Activated CD4-positive, alpha-beta T cell treated with anti-CD3 and anti-CD28 coated beads for 36 hours (primary cell): ENCODE measurements at regions of chr19 and their contacts with region 1.

Region 1: GRCh38 chr19:52527134-52527955 is at the start of gene ZNF808:
- DNase-seq: peak; percentile 99
- ATAC-seq: peak; percentile 92
- H3K4me3 Mint-ChIP-seq: peak within 1 kb of the TSS; percentile 91
- H3K27ac Mint-ChIP-seq: peak within 1 kb of the TSS; percentile 94
- H3K4me1 Mint-ChIP-seq: peaks cover 23% of the 10 kb centered on the region
- H3K27me3 Mint-ChIP-seq: no peaks in the 10 kb centered on the region
- total RNA-seq, gene ZNF808: 25.7 to 29.9 TPM

Region 2: DNA sequence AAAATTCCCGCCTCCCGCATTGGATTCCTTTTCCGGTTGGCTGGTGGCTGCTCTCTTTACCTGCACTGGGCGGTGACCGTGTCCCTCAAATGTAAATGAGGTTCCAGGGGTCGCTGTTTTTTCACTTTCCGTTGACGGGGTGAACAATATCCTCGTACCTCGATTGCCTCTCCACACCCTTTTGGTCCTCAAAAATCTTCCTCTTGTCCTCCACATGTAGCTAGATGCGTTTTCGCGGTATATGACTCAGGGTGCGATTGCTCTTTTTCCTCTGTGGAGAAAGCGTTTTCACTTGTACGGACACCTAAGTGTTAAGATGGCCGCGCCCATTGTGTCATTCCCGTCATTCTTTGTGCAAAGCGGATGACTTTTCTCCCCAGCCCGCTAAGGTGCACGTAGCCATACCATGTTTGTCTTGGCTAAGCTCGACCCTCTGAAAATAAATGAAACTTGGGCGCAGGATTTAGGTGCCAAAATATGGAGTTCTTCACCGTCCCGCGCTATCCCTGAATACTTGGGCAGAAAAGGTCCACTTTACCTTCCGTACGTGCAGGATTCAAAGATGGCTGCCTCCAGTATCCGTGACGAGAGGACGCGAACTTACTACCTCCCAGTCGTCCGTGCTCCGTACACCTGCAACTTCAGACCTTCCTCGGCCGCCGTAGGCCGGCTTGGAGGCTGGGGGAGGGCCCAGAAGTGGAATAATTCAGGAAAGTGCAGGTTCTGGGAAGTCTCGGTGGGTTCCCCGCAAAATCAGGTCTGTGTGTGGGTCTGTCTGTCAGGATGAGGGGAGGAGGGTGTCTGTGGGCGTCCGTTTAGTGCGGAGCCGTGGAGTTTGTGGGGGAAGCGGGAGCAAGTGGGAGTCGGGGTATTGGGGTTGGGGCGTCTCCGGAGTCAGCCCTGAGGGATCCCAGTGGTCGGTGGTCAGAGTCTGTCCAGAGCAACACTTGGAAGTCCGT is 600.3 kb before region 1 on chr19 and contains the start of gene ZNF613:
- CTCF ChIA-PET with region 1: no interaction called
- POLR2A ChIA-PET with region 1: no interaction called
- intact Hi-C with region 1: loop called in 1 of 2 experiments (anchors 2 kb)
- DNase-seq: peak; percentile 91
- ATAC-seq: peak; percentile 95
- H3K4me3 Mint-ChIP-seq: peak within 1 kb of the TSS; percentile 95
- H3K27ac Mint-ChIP-seq: peak within 1 kb of the TSS; percentile 97
- H3K4me1 Mint-ChIP-seq: peaks cover 20% of the 10 kb centered on the region
- H3K27me3 Mint-ChIP-seq: no peaks in the 10 kb centered on the region
- total RNA-seq, gene ZNF613: 4.2 to 6.3 TPM

Region 3: GRCh38 chr19:52171321-52172169 is 355.8 kb before region 1 on chr19 and contains the start of gene ZNF836:
- CTCF ChIA-PET with region 1: no interaction called
- POLR2A ChIA-PET with region 1: no interaction called
- intact Hi-C with region 1: loop called in 1 of 2 experiments (anchors 1 kb)
- DNase-seq: peak; percentile 96
- ATAC-seq: peak; percentile 96
- H3K4me3 Mint-ChIP-seq: peak within 1 kb of the TSS; percentile 87
- H3K27ac Mint-ChIP-seq: peak within 1 kb of the TSS; percentile 93
- H3K4me1 Mint-ChIP-seq: peaks cover 17% of the 10 kb centered on the region
- H3K27me3 Mint-ChIP-seq: no peaks in the 10 kb centered on the region
- total RNA-seq, gene ZNF836: 10.1 to 11.5 TPM

Region 4: GRCh38 chr19:52336117-52336790 is 191.1 kb before region 1 on chr19 and contains the start of gene ZNF610:
- CTCF ChIA-PET with region 1: no interaction called
- POLR2A ChIA-PET with region 1: no interaction called
- intact Hi-C with region 1: loop called in 1 of 2 experiments (anchors 1 kb)
- DNase-seq: peak; percentile 96
- ATAC-seq: peak; percentile 97
- H3K4me3 Mint-ChIP-seq: peak within 1 kb of the TSS; percentile 97
- H3K27ac Mint-ChIP-seq: peak within 1 kb of the TSS; percentile 96
- H3K4me1 Mint-ChIP-seq: peaks cover 10% of the 10 kb centered on the region
- H3K27me3 Mint-ChIP-seq: no peaks in the 10 kb centered on the region
- total RNA-seq, gene ZNF610: 2.3 to 3.3 TPM

Region 5: DNA sequence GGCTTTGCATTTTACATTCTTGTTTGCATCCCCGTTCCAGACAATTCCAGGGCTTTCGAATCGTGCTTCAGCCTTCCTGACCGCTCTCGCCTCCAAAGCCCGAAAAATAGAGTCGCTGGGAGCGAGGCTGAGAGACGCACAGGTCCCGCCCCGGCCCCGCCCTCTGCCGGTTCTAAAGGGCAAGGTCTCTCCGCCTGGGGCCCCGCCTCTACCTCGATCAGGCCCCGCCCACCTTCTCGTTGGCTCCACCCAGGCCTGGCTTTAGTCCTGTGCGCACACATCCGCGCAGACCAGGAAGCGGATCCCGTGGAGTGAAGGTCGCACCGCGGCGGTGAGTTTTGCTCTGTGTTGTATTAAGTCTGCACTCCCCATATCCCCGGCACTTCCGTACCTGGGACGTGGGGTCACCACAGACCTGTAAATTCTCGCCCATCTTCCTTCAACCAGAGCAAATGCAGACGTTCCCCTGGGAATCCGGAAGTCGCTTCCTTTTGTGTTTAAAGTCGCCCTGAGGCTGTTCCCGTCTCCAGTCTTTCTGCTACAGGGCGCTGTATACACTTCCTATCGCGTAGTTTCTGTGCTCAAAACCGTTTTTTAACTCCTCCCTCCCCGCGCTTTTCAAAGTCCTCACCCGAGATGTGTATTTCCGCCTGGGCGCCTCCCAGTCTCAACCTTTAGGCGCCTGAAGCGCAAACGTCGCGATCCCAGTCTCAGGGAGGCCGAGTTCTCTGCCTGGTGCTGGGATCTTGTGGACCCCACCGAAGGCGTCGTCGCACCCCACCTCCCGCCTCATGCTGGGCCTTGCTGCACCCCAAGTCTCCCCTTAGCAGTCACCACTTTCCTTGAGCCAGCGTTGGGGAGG is 42.9 kb after region 1 on chr19 and contains the start of gene ZNF701:
- CTCF ChIA-PET with region 1: no interaction called
- POLR2A ChIA-PET with region 1: no interaction called
- intact Hi-C with region 1: loop called in 1 of 2 experiments (anchors 1 kb)
- DNase-seq: peak; percentile 98
- ATAC-seq: peak; percentile 99
- H3K4me3 Mint-ChIP-seq: peak within 1 kb of the TSS; percentile 88
- H3K27ac Mint-ChIP-seq: peak within 1 kb of the TSS; percentile 96
- H3K4me1 Mint-ChIP-seq: peaks cover 27% of the 10 kb centered on the region
- H3K27me3 Mint-ChIP-seq: no peaks in the 10 kb centered on the region
- total RNA-seq, gene ZNF701: 19.0 to 21.5 TPM

Region 6: GRCh38 chr19:52690369-52691214 is 163.2 kb after region 1 on chr19:
- CTCF ChIA-PET with region 1: interaction called, 3 read pairs
- POLR2A ChIA-PET with region 1: no interaction called
- intact Hi-C with region 1: loop called in 1 of 2 experiments (anchors 2 kb)
- DNase-seq: peak; percentile 96
- ATAC-seq: peak; percentile 95
- H3K4me3 Mint-ChIP-seq: peak overlapping the region; percentile 90
- H3K27ac Mint-ChIP-seq: peak overlapping the region; percentile 96
- H3K4me1 Mint-ChIP-seq: peaks cover 27% of the 10 kb centered on the region
- H3K27me3 Mint-ChIP-seq: no peaks in the 10 kb centered on the region

Region 7: GRCh38 chr19:53333463-53334449 is 806.4 kb after region 1 on chr19 and contains the start of gene ZNF845:
- CTCF ChIA-PET with region 1: no interaction called
- POLR2A ChIA-PET with region 1: interaction called, 4 read pairs
- intact Hi-C with region 1: loop called in 1 of 2 experiments (anchors 1 kb)
- DNase-seq: peak; percentile 97
- ATAC-seq: peak; percentile 99
- H3K4me3 Mint-ChIP-seq: peak within 1 kb of the TSS; percentile 88
- H3K27ac Mint-ChIP-seq: peak within 1 kb of the TSS; percentile 92
- H3K4me1 Mint-ChIP-seq: peaks cover 10% of the 10 kb centered on the region
- H3K27me3 Mint-ChIP-seq: peaks cover 5% of the 10 kb centered on the region
- total RNA-seq, gene ZNF845: 5.9 to 6.3 TPM

Region 8: GRCh38 chr19:53455828-53456227 is 928.5 kb after region 1 on chr19:
- CTCF ChIA-PET with region 1: no interaction called
- POLR2A ChIA-PET with region 1: no interaction called
- intact Hi-C with region 1: no loop called
- DNase-seq: no peak
- ATAC-seq: no peak
- H3K4me3 Mint-ChIP-seq: no peak overlapping the region
- H3K27ac Mint-ChIP-seq: no peak overlapping the region
- H3K4me1 Mint-ChIP-seq: no peaks in the 10 kb centered on the region
- H3K27me3 Mint-ChIP-seq: no peaks in the 10 kb centered on the region